ENCODE measurements at regions of chr7 and their contacts with region 1.

Region 1: GRCh38 chr7:100719523-100720319 is 547 bp upstream of the EPO start:
- DNase-seq: no peak
- H3K4me3 Mint-ChIP-seq: no peak overlapping the region
- H3K27ac Mint-ChIP-seq: no peak overlapping the region
- H3K4me1 Mint-ChIP-seq: peaks cover 2% of the 10 kb centered on the region
- H3K27me3 Mint-ChIP-seq: peaks cover 40% of the 10 kb centered on the region

Region 2: GRCh38 chr7:100632951-100633717 is 86.6 kb before region 1 on chr7:
- CTCF ChIA-PET with region 1: interaction called, 10 read pairs
- POLR2A ChIA-PET with region 1: no interaction called
- intact Hi-C with region 1: no loop called
- DNase-seq: peak; percentile 78
- H3K4me3 Mint-ChIP-seq: peak overlapping the region; percentile 77
- H3K27ac Mint-ChIP-seq: peak overlapping the region; percentile 82
- H3K4me1 Mint-ChIP-seq: peaks cover 12% of the 10 kb centered on the region
- H3K27me3 Mint-ChIP-seq: peaks cover 3% of the 10 kb centered on the region

Region 3: GRCh38 chr7:100736671-100737070 is 16.9 kb after region 1 on chr7:
- CTCF ChIA-PET with region 1: no interaction called
- POLR2A ChIA-PET with region 1: no interaction called
- intact Hi-C with region 1: no loop called
- DNase-seq: no peak
- H3K4me3 Mint-ChIP-seq: no peak overlapping the region
- H3K27ac Mint-ChIP-seq: no peak overlapping the region
- H3K4me1 Mint-ChIP-seq: no peaks in the 10 kb centered on the region
- H3K27me3 Mint-ChIP-seq: no peaks in the 10 kb centered on the region

Measured in activated CD4-positive, alpha-beta memory T cell treated with anti-CD3 and anti-CD28 coated beads for 36 hours (primary cell).